Breast epithelium (tissue), 4 donors: ENCODE measurements at regions of chr4 and their contacts with region 1.

Region 1: GRCh38 chr4:40395908-40396793 is 61.0 kb downstream of the CHRNA9 start:
- DNase-seq: peak; percentile 81 to 84
- H3K4me3 ChIP-seq: no peak overlapping the region
- H3K27ac ChIP-seq: peak overlapping the region; percentile 56 to 82
- H3K4me1 ChIP-seq: peaks cover 0 to 7% of the 10 kb centered on the region in 2 donors
- H3K27me3 ChIP-seq: no peaks in the 10 kb centered on the region
- CTCF ChIP-seq: no peak
- POLR2A ChIP-seq: no peak

Region 2: GRCh38 chr4:38876636-38877035 is 1519.5 kb before region 1 on chr4:
- intact Hi-C with region 1: loop called (anchors 5 kb)
- DNase-seq: no peak
- H3K4me3 ChIP-seq: no peak overlapping the region
- H3K27ac ChIP-seq: no peak overlapping the region
- H3K4me1 ChIP-seq: no peaks in the 10 kb centered on the region
- H3K27me3 ChIP-seq: no peaks in the 10 kb centered on the region
- CTCF ChIP-seq: no peak
- POLR2A ChIP-seq: no peak

Region 3: DNA sequence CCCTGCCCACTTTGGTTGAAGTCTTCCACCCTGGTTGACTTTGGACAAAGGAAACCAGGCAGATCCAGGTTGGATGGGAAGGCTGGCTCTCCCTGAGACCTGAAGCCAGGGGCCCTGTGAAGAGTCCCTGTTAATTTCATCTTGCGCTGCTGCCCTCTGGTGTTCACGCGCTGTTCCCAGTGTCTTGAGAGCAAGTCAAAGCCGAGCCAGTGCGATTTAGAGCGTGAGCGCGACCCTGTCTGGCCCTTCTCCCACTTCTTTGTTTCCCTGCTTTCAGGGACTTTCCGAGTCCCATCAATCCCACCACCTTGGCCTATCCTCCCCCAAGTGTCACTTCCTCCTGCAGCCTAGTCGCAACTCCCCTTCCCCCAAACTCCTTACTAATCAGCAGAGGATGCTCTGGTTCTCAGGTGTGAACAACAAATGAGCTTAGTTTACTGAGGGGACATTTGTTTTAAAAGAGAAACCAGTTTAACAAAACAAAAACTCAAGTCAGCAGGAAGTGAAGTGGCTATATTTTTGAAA is 86.8 kb before region 1 on chr4:
- intact Hi-C with region 1: no loop called
- DNase-seq: peak; percentile 86 to 92
- H3K4me3 ChIP-seq: peak overlapping the region in 1 of 3 donors; percentile 4
- H3K27ac ChIP-seq: peak overlapping the region in 1 of 2 donors; percentile 52
- H3K4me1 ChIP-seq: no peaks in the 10 kb centered on the region
- H3K27me3 ChIP-seq: no peaks in the 10 kb centered on the region
- CTCF ChIP-seq: peak; percentile 59 to 87 (median 83)
- POLR2A ChIP-seq: no peak

Region 4: DNA sequence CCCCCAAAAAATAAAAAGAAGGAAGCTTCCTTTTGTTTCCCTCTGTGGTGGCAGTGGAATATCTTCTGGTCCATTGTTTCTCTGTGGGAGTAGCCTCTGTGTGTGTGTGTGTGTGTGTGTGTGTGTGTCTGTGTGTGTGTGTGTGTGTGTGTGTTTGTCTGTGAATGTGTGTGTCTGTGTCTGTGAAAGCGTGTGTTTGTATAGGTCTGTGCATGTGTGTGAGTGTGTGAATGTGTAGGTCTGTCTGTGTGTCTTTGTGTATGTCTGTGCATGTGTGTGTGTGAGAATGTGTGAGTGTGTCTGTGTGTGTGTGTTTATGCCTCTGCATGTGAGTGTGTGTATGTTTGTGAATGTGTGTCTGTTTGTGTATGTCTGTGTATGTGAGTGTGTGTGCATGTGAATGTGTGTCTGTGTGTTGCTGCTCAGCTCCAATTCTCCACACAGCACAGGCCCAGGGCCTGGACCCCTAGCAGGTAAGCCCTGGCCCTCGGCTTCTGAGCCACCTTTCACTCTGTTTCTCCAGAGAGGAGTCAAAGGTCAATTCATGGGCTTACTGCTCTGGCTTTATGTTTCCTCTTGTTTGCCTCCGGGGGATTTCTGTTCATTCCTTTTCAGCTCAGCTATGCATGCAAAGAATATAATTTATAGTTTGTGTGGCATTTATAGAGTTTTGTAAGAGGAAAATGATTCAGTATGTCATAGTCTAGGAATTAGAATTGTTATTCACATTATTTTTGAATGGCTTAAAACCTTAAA is 950.3 kb after region 1 on chr4:
- intact Hi-C with region 1: no loop called
- DNase-seq: no peak
- H3K4me3 ChIP-seq: no peak overlapping the region
- H3K27ac ChIP-seq: no peak overlapping the region
- H3K4me1 ChIP-seq: no peaks in the 10 kb centered on the region
- H3K27me3 ChIP-seq: no peaks in the 10 kb centered on the region
- CTCF ChIP-seq: no peak
- POLR2A ChIP-seq: no peak